Transverse colon (tissue), 4 donors: ENCODE measurements at regions of chr3 and their contacts with region 1.

Region 1: GRCh38 chr3:189961525-189962161 is 159.1 kb downstream of the P3H2 start:
- DNase-seq: peak; percentile 82
- H3K4me3 ChIP-seq: no peak overlapping the region
- H3K27ac ChIP-seq: no peak overlapping the region
- H3K4me1 ChIP-seq: peaks cover 0 to 6% (median 0%) of the 10 kb centered on the region in 4 donors
- H3K27me3 ChIP-seq: no peaks in the 10 kb centered on the region
- CTCF ChIP-seq: peak; percentile 88 to 92 (median 90)
- EP300 ChIP-seq: no peak
- POLR2A ChIP-seq: no peak

Region 2: GRCh38 chr3:189981668-189982067 is 20.0 kb after region 1 on chr3:
- in situ Hi-C with region 1: no loop called
- intact Hi-C with region 1: no loop called
- DNase-seq: no peak
- H3K4me3 ChIP-seq: no peak overlapping the region
- H3K27ac ChIP-seq: peak overlapping the region in 3 of 4 donors; percentile 19 to 45 (median 27)
- H3K4me1 ChIP-seq: peaks cover 0 to 16% (median 6%) of the 10 kb centered on the region in 4 donors
- H3K27me3 ChIP-seq: no peaks in the 10 kb centered on the region
- CTCF ChIP-seq: no peak
- EP300 ChIP-seq: no peak
- POLR2A ChIP-seq: no peak

Region 3: DNA sequence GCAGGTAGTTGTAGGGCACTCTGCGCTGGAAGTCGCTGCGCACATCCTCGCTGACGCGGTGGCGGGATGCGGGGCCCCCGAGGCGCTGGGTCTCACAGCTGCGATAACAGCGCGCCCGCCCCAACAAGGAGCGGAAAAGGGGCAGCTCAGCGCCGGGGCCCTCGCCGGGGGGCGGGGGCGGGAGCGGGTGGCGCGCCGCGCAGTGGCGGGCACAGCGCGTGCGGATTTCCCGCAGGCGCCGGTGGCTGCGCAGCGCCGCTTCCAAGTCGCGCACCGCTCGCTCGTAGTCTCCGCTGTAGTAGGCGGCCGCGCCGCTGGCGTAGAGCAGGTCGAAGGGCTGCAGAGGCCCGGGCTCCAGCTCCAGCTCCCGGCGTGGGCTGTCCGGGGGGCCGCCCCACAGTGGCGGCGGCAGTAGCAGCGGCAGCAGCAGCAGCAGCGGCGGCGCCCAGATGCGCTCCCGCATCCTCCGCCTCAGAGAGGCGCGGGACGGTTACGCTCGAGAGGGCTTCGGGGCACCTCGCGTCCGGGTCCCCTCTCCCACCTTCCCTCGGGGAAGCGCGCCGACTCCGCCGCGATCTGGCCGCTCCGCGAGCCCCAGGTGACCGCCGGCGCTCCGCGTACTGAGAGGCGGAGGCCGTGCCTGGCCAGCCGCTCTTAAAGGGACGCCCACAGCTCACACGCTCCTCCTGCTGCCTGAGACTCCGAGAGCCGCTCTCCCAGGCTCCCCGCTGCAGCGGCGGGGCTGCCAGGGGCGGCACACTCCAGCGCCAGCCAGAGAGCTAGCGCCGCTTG is 158.8 kb after region 1 on chr3 and contains the start of gene P3H2:
- in situ Hi-C with region 1: no loop called
- intact Hi-C with region 1: loop called (anchors 5 kb)
- DNase-seq: peak; percentile 84
- H3K4me3 ChIP-seq: peak within 1 kb of the TSS; percentile 52 to 76 (median 66)
- H3K27ac ChIP-seq: peak within 1 kb of the TSS; percentile 80 to 84 (median 82)
- H3K4me1 ChIP-seq: peaks cover 6 to 17% (median 12%) of the 10 kb centered on the region in 4 donors
- H3K27me3 ChIP-seq: peaks cover 9% of the 10 kb centered on the region
- CTCF ChIP-seq: peak; percentile 43 to 54 (median 51)
- EP300 ChIP-seq: no peak
- POLR2A ChIP-seq: peak; percentile 38
- total RNA-seq, gene P3H2: 26.6 to 153 (median 54.3) TPM

Region 4: GRCh38 chr3:190197346-190197763 is 235.7 kb after region 1 on chr3:
- in situ Hi-C with region 1: loop called in 3 of 4 experiments (anchors 5 to 10 kb)
- intact Hi-C with region 1: loop called (anchors 5 kb)
- DNase-seq: no peak
- H3K4me3 ChIP-seq: no peak overlapping the region
- H3K27ac ChIP-seq: no peak overlapping the region
- H3K4me1 ChIP-seq: peaks cover 0 to 10% (median 0%) of the 10 kb centered on the region in 4 donors
- H3K27me3 ChIP-seq: no peaks in the 10 kb centered on the region
- CTCF ChIP-seq: no peak
- EP300 ChIP-seq: no peak
- POLR2A ChIP-seq: no peak

Region 5: DNA sequence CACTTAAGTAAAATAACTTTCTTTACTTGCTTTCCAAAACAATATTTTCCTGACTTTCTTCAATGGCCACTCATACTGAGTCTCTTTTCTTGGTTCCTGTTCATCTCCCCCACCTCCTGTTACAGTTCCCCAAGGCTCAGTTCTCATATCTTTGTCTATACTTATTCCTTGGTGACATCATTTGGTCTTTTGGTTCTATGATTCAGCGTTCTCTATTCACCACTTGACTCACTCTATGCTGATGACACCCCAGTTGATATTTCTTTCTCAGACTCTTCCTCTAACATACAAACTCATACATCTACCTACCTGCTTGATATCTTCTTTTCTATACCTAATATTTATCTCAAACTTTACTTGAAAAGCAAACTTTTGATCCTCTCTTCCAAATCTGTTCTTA is 244.1 kb after region 1 on chr3:
- in situ Hi-C with region 1: loop called in 2 of 4 experiments (anchors 5 to 10 kb)
- intact Hi-C with region 1: loop called (anchors 5 kb)
- DNase-seq: no peak
- H3K4me3 ChIP-seq: no peak overlapping the region
- H3K27ac ChIP-seq: no peak overlapping the region
- H3K4me1 ChIP-seq: peaks cover 0 to 2% (median 0%) of the 10 kb centered on the region in 4 donors
- H3K27me3 ChIP-seq: no peaks in the 10 kb centered on the region
- CTCF ChIP-seq: no peak
- EP300 ChIP-seq: no peak
- POLR2A ChIP-seq: no peak

Region 6: GRCh38 chr3:190321789-190322603 is 360.4 kb after region 1 on chr3 and contains the start of gene CLDN1:
- in situ Hi-C with region 1: loop called (anchors 10 kb)
- intact Hi-C with region 1: loop called (anchors 5 kb)
- DNase-seq: peak; percentile 84
- H3K4me3 ChIP-seq: peak within 1 kb of the TSS; percentile 27 to 55 (median 39)
- H3K27ac ChIP-seq: peak within 1 kb of the TSS in 1 of 4 donors; percentile 58
- H3K4me1 ChIP-seq: peaks cover 0 to 7% (median 5%) of the 10 kb centered on the region in 4 donors
- H3K27me3 ChIP-seq: peaks cover 11% of the 10 kb centered on the region
- CTCF ChIP-seq: peak; percentile 79 to 97 (median 96)
- EP300 ChIP-seq: no peak
- POLR2A ChIP-seq: no peak
- total RNA-seq, gene CLDN1: 0.37 to 0.95 (median 0.82) TPM in 3 of 4 donors, not detected in the other

Region 7: DNA sequence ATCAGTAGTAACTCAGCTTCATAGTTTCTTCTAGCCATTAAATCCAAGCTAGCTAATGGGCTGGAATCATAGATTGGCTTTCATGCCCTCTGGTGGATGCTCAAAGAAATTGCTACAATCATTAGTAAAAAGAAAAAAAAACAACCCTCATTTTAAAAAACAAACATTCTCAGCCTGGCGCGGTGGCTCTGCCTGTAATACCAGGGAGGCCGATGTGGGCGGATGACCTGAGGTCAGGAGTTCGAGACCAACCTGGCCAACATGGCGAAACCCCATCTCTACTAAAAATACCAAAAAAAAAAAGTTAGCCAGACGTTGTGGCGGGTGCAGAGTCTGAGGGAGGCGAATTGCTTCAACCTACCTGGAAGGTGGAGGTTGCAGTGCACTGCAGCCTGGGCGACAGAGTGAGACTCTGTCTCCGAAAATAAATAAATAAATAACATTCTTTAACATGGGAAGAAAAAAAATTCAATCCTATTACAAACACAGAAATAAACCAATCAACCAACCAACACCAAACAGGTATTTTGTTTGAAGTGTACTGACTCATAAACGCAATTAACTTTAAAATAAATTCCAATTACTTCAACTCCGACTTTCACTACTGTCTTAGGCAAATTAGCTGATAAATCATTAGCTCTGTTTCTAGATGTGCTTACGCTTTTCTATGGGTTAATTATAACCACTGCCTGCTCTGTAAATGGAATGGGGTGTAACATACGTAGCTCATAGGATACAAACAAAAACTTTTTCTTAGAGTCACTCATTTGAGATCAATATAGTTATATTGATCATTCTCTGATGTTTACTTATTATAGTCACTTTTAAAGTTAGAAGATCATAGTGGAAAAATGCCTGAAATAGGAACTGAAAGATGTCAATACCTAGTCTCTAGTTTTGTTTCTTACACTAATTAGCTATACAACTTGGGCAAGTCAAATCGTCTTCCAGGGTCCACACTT is 463.1 kb after region 1 on chr3:
- in situ Hi-C with region 1: loop called in 1 of 4 experiments (anchors 25 kb)
- intact Hi-C with region 1: no loop called
- DNase-seq: peak; percentile 16
- H3K4me3 ChIP-seq: no peak overlapping the region
- H3K27ac ChIP-seq: no peak overlapping the region
- H3K4me1 ChIP-seq: peaks cover 0 to 4% (median 0%) of the 10 kb centered on the region in 4 donors
- H3K27me3 ChIP-seq: no peaks in the 10 kb centered on the region
- CTCF ChIP-seq: peak; percentile 45 to 57 (median 54)
- EP300 ChIP-seq: no peak
- POLR2A ChIP-seq: no peak